ENCODE measurements at regions of chr11 and their contacts with region 1.

Region 1: GRCh38 chr11:122727101-122727929 is 71.8 kb downstream of the UBASH3B start:
- DNase-seq: peak; percentile 76
- ATAC-seq: peak; percentile 77
- H3K4me3 Mint-ChIP-seq: peak overlapping the region; percentile 65
- H3K27ac Mint-ChIP-seq: peak overlapping the region; percentile 96
- H3K4me1 Mint-ChIP-seq: peaks cover 82% of the 10 kb centered on the region
- H3K27me3 Mint-ChIP-seq: no peaks in the 10 kb centered on the region

Region 2: DNA sequence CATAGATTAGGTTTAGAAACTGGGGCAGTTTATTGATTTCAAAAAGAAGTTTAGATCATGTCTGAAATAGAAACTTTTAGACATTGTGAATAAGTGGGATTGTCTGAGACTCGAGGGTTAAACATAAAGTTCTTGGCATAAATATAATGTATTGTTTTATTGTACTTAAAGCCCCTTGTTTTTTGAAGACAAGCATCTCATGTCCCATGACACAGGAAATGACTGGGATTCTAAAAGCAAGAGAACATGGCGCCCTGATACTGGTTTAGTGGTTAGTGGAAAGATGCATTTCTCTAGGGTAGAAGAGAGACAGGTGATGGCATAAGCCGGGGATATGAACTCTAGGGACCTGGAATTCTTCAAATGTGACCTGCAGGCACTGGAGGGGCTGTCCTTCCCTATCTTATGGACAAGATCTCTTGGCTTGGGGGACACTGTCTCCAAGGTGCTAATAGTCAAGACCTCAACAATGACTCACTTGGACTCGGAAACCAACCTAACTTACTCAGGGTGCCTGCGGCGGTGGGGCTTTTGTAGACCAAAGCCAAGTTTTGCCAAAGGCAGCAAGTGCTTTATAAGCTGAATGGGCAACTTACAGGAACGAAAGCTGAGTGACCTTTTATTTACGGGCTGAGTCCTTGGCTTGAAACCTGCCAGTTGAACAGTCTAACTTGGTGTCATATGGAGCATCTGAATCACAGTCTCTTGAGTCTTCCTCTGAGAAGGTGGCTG is 23.6 kb before region 1 on chr11:
- CTCF ChIA-PET with region 1: no interaction called
- DNase-seq: no peak
- ATAC-seq: peak; percentile 69
- H3K4me3 Mint-ChIP-seq: no peak overlapping the region
- H3K27ac Mint-ChIP-seq: peak overlapping the region; percentile 73
- H3K4me1 Mint-ChIP-seq: peaks cover 35% of the 10 kb centered on the region
- H3K27me3 Mint-ChIP-seq: no peaks in the 10 kb centered on the region

Region 3: DNA sequence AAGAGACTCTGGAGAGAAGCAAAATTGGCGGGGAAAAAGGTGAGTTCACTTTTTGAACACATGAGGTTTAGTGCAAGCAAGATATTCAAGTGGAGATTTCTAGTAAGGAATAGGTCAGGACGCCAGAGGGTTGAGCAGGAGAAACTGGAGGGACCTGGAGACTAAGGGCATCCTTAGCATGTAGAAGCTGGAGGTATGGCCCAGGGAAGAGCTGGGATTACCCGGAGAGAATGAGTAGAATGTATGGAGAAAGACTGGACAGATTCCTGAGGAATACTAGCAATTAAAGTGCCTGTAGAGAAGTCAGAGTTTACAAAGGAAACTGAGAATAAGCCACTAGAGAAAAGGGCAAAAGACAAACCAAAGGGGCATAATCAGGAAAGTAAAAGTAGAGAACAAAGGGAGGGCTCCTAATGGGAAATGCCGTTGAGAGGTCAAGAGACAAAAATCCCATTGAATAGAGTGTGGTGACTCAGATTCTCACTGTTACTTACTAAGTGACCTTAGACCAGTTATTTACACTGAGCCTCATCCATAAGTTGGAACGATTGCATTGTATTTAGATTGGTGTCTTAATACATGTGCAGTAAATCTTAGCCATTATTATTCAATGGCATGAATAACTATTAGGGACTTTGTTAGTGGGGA is 10.5 kb after region 1 on chr11:
- CTCF ChIA-PET with region 1: interaction called, 15 read pairs
- DNase-seq: no peak
- ATAC-seq: no peak
- H3K4me3 Mint-ChIP-seq: no peak overlapping the region
- H3K27ac Mint-ChIP-seq: no peak overlapping the region
- H3K4me1 Mint-ChIP-seq: peaks cover 8% of the 10 kb centered on the region
- H3K27me3 Mint-ChIP-seq: no peaks in the 10 kb centered on the region

Region 4: GRCh38 chr11:122843281-122844141 is 116.2 kb after region 1 on chr11:
- CTCF ChIA-PET with region 1: no interaction called
- DNase-seq: peak; percentile 88
- ATAC-seq: peak; percentile 77
- H3K4me3 Mint-ChIP-seq: peak overlapping the region; percentile 62
- H3K27ac Mint-ChIP-seq: peak overlapping the region; percentile 97
- H3K4me1 Mint-ChIP-seq: peaks cover 79% of the 10 kb centered on the region
- H3K27me3 Mint-ChIP-seq: no peaks in the 10 kb centered on the region